ENCODE measurements at regions of chr3 and their contacts with region 1.

Region 1: DNA sequence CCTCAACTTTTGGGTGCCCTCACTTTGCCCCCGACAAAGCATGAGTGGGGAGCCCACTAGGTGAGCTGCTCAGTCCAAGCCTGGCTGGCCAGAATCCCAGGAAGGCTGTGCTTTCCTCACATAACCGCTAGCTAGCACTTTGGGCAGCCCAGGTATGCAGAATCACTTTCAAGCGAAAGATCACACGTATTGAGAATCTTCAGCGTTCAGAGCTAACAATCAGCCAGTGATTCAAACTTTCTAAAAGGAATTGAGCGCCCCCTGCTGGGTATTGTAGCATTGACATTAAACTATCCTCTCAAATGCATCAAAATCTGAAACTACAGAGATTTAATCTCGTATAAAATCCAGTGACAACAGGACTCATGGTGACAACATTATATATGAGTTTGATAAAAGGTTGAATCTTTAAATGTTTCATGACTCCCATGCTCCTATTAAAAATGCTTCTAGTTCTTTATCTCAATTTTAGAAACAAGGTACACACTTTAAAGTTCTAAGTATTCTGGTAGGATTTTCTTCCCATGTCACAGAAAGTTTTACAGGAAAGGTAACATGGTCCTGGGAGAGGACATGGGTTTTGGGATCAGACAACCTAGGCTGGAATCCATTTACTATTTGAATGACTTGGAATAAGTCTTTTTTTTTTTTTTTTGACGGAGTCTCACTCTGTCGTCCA is 11.8 kb downstream of the ANAPC13 start:
- DNase-seq: peak; percentile 82
- H3K4me3 ChIP-seq: no peak overlapping the region
- H3K27ac ChIP-seq: peak overlapping the region; percentile 49
- H3K4me1 ChIP-seq: peaks cover 58% of the 10 kb centered on the region
- H3K27me3 ChIP-seq: no peaks in the 10 kb centered on the region
- CTCF ChIP-seq: peak; percentile 60 to 70

Region 2: GRCh38 chr3:134197681-134198261 is 276.2 kb before region 1 on chr3:
- CTCF ChIA-PET with region 1: no interaction called
- dilution Hi-C with region 1: loop called (anchors 5 kb)
- in situ Hi-C with region 1: no loop called
- intact Hi-C with region 1: no loop called
- DNase-seq: peak; percentile 68
- H3K4me3 ChIP-seq: no peak overlapping the region
- H3K27ac ChIP-seq: no peak overlapping the region
- H3K4me1 ChIP-seq: peaks cover 50% of the 10 kb centered on the region
- H3K27me3 ChIP-seq: no peaks in the 10 kb centered on the region
- CTCF ChIP-seq: peak; percentile 71 to 76

Region 3: GRCh38 chr3:134364061-134364935 is 109.7 kb before region 1 on chr3:
- CTCF ChIA-PET with region 1: interaction called, 3 read pairs
- dilution Hi-C with region 1: no loop called
- in situ Hi-C with region 1: loop called in 1 of 2 experiments (anchors 10 kb)
- intact Hi-C with region 1: loop called (anchors 2 kb)
- DNase-seq: peak; percentile 93
- H3K4me3 ChIP-seq: peak overlapping the region in 2 of 3 experiments; percentile 17 to 23
- H3K27ac ChIP-seq: peak overlapping the region; percentile 28
- H3K4me1 ChIP-seq: peaks cover 88% of the 10 kb centered on the region
- H3K27me3 ChIP-seq: no peaks in the 10 kb centered on the region
- CTCF ChIP-seq: no peak

Region 4: DNA sequence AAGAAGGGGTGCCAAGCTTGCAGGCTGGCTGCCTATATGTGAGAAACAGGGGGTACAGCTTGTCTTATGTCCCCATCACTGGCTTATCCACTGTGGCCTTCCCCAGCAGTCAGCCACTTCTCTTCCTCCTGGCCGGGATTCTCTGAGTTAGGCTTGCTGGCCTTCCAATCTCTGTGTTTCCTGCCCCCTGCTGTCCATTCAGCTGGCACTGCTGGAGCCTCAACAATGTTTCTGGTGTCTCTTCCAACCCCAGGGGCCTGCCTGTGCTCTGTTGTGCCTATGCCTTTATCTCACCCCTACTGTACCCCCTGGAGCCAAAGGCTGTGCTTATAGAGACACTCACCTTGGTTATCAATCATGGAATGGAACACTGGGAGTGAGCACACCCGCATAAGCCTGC is 24.7 kb before region 1 on chr3:
- CTCF ChIA-PET with region 1: interaction called, 3 read pairs
- dilution Hi-C with region 1: no loop called
- in situ Hi-C with region 1: no loop called
- intact Hi-C with region 1: loop called (anchors 1 kb)
- DNase-seq: peak; percentile 45
- H3K4me3 ChIP-seq: no peak overlapping the region
- H3K27ac ChIP-seq: no peak overlapping the region
- H3K4me1 ChIP-seq: peaks cover 26% of the 10 kb centered on the region
- H3K27me3 ChIP-seq: no peaks in the 10 kb centered on the region
- CTCF ChIP-seq: peak; percentile 73 to 84

Region 5: GRCh38 chr3:134496471-134497071 is 22.6 kb after region 1 on chr3:
- CTCF ChIA-PET with region 1: no interaction called
- dilution Hi-C with region 1: no loop called
- in situ Hi-C with region 1: no loop called
- intact Hi-C with region 1: no loop called
- DNase-seq: no peak
- H3K4me3 ChIP-seq: no peak overlapping the region
- H3K27ac ChIP-seq: no peak overlapping the region
- H3K4me1 ChIP-seq: peaks cover 10% of the 10 kb centered on the region
- H3K27me3 ChIP-seq: no peaks in the 10 kb centered on the region
- CTCF ChIP-seq: no peak